ENCODE measurements at regions of chr6 and their contacts with region 1.

Region 1: DNA sequence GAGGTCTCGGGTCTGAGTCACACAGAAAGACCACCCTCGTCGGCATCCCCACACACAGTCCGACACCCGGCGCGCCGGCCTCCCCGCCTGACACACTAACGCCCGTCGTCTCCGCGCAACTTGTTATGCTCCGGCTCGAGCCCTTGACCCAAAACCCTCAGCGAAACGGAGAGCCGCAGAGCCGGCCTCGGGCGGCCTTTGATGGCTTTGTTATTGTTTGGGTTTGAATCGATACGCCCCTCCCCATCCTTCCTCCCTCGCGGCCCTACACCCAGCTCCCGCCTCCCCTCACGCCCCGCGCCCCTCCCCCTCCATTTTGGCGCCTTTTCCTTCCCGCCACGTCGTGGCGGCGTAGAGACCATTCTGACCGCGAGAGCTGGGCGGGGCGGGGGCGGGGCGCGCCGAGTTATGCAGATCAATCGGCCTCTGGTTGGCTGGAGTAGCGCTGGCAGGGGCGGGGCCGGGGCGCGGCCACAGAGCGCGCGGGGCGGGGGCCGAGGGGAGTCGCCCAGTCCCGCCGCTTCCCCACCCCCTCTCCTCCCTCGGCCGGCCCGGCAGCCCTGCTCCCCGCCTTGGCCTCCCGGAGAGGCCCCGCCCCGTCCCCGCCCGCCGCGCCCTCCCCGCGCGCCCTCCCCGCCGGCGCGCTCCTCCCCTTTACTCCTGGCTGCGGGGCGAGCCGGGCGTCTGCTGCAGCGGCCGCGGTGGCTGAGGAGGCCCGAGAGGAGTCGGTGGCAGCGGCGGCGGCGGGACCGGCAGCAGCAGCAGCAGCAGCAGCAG is at the start of gene PIM1:
- DNase-seq: peak; percentile 92 to 99 (median 98)
- H3K4me3 ChIP-seq: peak within 1 kb of the TSS; percentile 68
- H3K4me3 Mint-ChIP-seq: peak within 1 kb of the TSS; percentile 90 to 99 (median 94)
- H3K27ac ChIP-seq: peak within 1 kb of the TSS; percentile 89
- H3K27ac Mint-ChIP-seq: peak within 1 kb of the TSS; percentile 91 to 98 (median 96)
- H3K4me1 ChIP-seq: peaks cover 29% of the 10 kb centered on the region
- H3K4me1 Mint-ChIP-seq: peaks cover 40 to 42% (median 41%) of the 10 kb centered on the region in 3 donors
- H3K27me3 ChIP-seq: no peaks in the 10 kb centered on the region
- H3K27me3 Mint-ChIP-seq: peaks cover 0 to 3% of the 10 kb centered on the region in 2 donors
- total RNA-seq, gene PIM1: 93.7 to 99.1 TPM

Region 2: GRCh38 chr6:37005061-37005810 is 164.4 kb before region 1 on chr6 and contains the start of gene FGD2:
- CTCF ChIA-PET with region 1: interaction called, 10 read pairs
- POLR2A ChIA-PET with region 1: interaction called, 4 read pairs
- DNase-seq: no peak
- H3K4me3 ChIP-seq: no peak within 1 kb of the TSS
- H3K4me3 Mint-ChIP-seq: peak within 1 kb of the TSS in 6 of 7 donors; percentile 53 to 80 (median 74)
- H3K27ac ChIP-seq: no peak within 1 kb of the TSS
- H3K27ac Mint-ChIP-seq: peak within 1 kb of the TSS in 7 of 8 donors; percentile 58 to 96 (median 79)
- H3K4me1 ChIP-seq: peaks cover 16% of the 10 kb centered on the region
- H3K4me1 Mint-ChIP-seq: peaks cover 9 to 29% (median 14%) of the 10 kb centered on the region in 3 donors
- H3K27me3 ChIP-seq: no peaks in the 10 kb centered on the region
- H3K27me3 Mint-ChIP-seq: no peaks in the 10 kb centered on the region
- total RNA-seq, gene FGD2: 1.2 to 1.3 TPM

Region 3: GRCh38 chr6:37102279-37103168 is 67.2 kb before region 1 on chr6:
- CTCF ChIA-PET with region 1: interaction called, 3 read pairs
- POLR2A ChIA-PET with region 1: interaction called, 16 read pairs
- DNase-seq: peak; percentile 52 to 90 (median 80)
- H3K4me3 ChIP-seq: peak overlapping the region; percentile 66
- H3K4me3 Mint-ChIP-seq: peak overlapping the region; percentile 76 to 88 (median 79)
- H3K27ac ChIP-seq: peak overlapping the region; percentile 68
- H3K27ac Mint-ChIP-seq: peak overlapping the region; percentile 89 to 98 (median 94)
- H3K4me1 ChIP-seq: peaks cover 21% of the 10 kb centered on the region
- H3K4me1 Mint-ChIP-seq: peaks cover 21 to 26% (median 24%) of the 10 kb centered on the region in 3 donors
- H3K27me3 ChIP-seq: no peaks in the 10 kb centered on the region
- H3K27me3 Mint-ChIP-seq: no peaks in the 10 kb centered on the region

Region 4: DNA sequence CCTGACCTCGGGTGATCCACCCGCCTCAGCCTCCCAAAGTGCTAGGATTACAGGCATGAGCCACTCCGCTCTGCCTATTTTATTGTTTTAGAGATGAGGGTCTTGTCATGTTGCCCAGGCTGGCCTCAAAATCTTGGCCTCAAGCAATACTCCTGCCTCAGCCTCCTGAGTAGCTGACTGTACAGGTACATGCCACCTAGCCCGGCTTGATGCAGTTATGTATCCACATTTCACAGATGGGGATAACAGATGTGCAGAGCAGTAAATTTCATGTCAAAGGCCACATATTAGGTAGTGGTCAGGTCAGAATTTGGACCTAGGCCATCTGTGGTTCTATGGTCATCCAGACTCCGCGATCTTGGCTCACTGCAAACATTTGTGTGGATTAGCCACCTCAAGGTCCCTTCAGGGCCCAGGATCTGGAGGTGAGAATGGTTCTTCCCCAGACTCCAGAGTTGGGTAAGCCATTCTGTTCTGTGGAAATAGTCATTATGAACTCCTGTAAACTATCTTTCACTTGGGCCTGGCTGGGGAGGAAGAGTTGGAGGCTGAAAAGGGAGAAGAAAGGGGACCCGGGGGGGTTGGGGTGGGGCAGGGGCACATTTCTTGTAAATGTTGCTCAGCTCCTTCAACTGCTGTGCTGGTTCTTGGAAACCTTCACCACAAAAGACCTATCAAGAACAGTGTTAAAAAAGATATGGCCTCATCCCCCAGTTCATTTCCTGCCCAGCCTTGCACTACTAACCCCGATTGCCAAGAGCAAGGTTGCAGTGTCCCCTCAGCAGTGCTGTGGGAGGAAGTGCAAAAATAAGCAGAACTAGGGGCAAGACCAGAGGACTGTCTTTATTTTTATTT is 13.3 kb after region 1 on chr6:
- CTCF ChIA-PET with region 1: interaction called, 31 read pairs
- POLR2A ChIA-PET with region 1: interaction called, 8 read pairs
- DNase-seq: peak; percentile 31 to 76 (median 67)
- H3K4me3 ChIP-seq: peak overlapping the region; percentile 60
- H3K4me3 Mint-ChIP-seq: peak overlapping the region; percentile 14 to 74 (median 71)
- H3K27ac ChIP-seq: peak overlapping the region; percentile 82
- H3K27ac Mint-ChIP-seq: peak overlapping the region; percentile 86 to 93 (median 90)
- H3K4me1 ChIP-seq: peaks cover 76% of the 10 kb centered on the region
- H3K4me1 Mint-ChIP-seq: peaks cover 55 to 74% (median 66%) of the 10 kb centered on the region in 3 donors
- H3K27me3 ChIP-seq: no peaks in the 10 kb centered on the region
- H3K27me3 Mint-ChIP-seq: no peaks in the 10 kb centered on the region

Region 5: DNA sequence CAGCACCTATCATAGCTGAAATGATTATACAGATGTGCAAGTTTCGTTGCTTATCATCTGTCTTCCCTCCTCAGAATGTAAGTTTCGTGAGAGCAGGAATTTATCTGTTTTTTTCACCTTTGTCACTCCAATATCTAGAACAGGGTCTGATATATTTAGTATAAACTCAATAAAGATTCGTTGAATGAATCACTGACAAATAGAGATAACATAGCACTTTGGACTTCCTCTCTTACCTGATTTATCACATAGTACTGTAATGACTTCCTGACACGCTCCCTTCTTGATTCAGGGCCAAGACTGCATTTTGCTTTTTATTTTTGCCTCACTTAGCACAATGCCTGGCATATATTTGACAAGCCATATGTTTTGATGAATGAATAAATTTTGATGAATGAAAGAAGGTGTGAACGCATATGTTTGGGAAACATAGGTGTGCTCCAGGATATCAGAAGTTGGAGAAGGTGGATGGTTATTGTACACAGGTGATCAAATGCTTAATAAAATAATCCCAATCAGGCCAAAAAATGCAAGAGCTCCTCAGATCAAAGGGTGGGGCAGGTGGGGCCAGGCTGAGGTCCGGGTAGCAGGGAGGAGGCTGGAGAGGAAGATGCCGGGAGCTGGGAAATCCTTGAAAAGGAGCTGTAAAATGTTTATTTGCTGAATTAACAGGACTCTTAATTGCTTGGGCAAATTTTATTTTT is 33.3 kb after region 1 on chr6:
- CTCF ChIA-PET with region 1: interaction called, 216 read pairs
- POLR2A ChIA-PET with region 1: interaction called, 25 read pairs
- DNase-seq: peak in 1 of 5 donors; percentile 7
- H3K4me3 ChIP-seq: no peak overlapping the region
- H3K4me3 Mint-ChIP-seq: peak overlapping the region in 6 of 7 donors; percentile 11 to 66 (median 38)
- H3K27ac ChIP-seq: peak overlapping the region; percentile 0
- H3K27ac Mint-ChIP-seq: peak overlapping the region; percentile 75 to 98 (median 90)
- H3K4me1 ChIP-seq: peaks cover 41% of the 10 kb centered on the region
- H3K4me1 Mint-ChIP-seq: peaks cover 48 to 61% (median 52%) of the 10 kb centered on the region in 3 donors
- H3K27me3 ChIP-seq: no peaks in the 10 kb centered on the region
- H3K27me3 Mint-ChIP-seq: no peaks in the 10 kb centered on the region